Activated T-helper 2 cell treated with anti-CD3 and anti-CD28 coated beads, Interferon-gamma antibody, Interleukin-2, Interleukin-4, amounts not matched to agents 10 μg/mL and 5 μg/mL and 100 μg/mL, durations not matched to agents 14 hours and 24 hours and 36 hours (primary cell): ENCODE measurements at regions of chr15 and their contacts with region 1.

Region 1: GRCh38 chr15:51776952-51777574 is 25.7 kb downstream of the TMOD2 start:
- DNase-seq: peak; percentile 53
- H3K4me3 Mint-ChIP-seq: no peak overlapping the region
- H3K27ac Mint-ChIP-seq: no peak overlapping the region
- H3K4me1 Mint-ChIP-seq: peaks cover 2% of the 10 kb centered on the region
- H3K27me3 Mint-ChIP-seq: no peaks in the 10 kb centered on the region

Region 2: GRCh38 chr15:51649659-51650521 is 127.2 kb before region 1 on chr15:
- intact Hi-C with region 1: loop called (anchors 1 kb)
- DNase-seq: peak; percentile 13
- H3K4me3 Mint-ChIP-seq: no peak overlapping the region
- H3K27ac Mint-ChIP-seq: no peak overlapping the region
- H3K4me1 Mint-ChIP-seq: no peaks in the 10 kb centered on the region
- H3K27me3 Mint-ChIP-seq: peaks cover 9% of the 10 kb centered on the region

Region 3: GRCh38 chr15:51737280-51738017 is 39.6 kb before region 1 on chr15 and contains the start of gene LYSMD2:
- intact Hi-C with region 1: loop called (anchors 2 kb)
- DNase-seq: peak; percentile 59
- H3K4me3 Mint-ChIP-seq: peak within 1 kb of the TSS; percentile 78
- H3K27ac Mint-ChIP-seq: peak within 1 kb of the TSS; percentile 74
- H3K4me1 Mint-ChIP-seq: peaks cover 42% of the 10 kb centered on the region
- H3K27me3 Mint-ChIP-seq: peaks cover 6% of the 10 kb centered on the region
- total RNA-seq, gene LYSMD2: 4.0 and 5.8 TPM in 2 replicates